ENCODE measurements at regions of chr7 and their contacts with region 1.

Region 1: GRCh38 chr7:157386979-157387800 is 50.4 kb downstream of the DNAJB6 start:
- DNase-seq: peak; percentile 54
- H3K4me3 ChIP-seq: no peak overlapping the region
- H3K27ac ChIP-seq: no peak overlapping the region
- H3K27me3 ChIP-seq: no peaks in the 10 kb centered on the region
- CTCF ChIP-seq: peak; percentile 83

Region 2: DNA sequence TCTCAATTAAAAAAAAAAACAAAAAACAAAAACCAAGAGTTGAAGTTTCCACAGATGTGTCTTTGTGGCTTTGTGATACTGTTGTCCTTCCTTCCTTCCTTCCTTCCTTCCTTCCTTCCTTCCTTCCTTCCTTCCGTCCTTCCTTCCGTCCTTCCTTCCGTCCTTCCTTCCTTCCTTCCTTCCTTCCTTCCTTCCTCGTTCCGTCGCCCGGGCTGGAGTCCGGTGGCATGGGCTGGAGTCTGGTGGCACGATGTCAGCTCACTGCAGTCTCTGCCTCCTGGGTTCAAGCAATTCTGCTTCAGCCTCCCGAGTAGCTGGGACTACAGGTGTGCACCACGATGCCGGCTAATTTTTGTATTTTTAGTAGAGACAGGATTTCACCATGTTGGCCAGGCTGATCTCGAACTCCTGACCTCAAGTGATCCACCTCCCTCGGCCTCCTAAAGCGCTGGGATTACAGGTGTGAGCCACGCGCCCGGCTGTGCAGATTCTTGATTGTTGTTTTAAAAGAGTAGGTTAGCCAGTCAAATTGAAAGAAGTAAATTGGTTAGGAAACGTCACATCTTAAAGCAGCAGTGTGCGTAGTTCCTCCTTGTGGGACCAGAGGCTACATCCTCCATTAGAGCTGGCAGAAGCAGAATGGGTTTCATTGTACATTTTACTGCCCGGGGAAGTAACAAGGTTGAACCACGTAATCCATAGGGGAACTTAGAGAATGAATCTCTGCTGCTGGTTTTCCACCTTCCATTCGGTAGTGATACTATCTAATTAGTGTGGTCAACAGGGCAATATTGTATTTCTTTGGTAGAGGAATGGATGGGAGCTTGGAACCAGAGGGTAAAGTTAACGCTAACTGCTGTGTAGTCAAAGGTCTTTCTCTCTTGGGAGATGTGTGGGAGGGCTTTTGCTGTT is 29.8 kb before region 1 on chr7:
- CTCF ChIA-PET with region 1: interaction called, 11 read pairs
- POLR2A ChIA-PET with region 1: no interaction called
- DNase-seq: no peak
- H3K4me3 ChIP-seq: no peak overlapping the region
- H3K27ac ChIP-seq: no peak overlapping the region
- H3K27me3 ChIP-seq: no peaks in the 10 kb centered on the region
- CTCF ChIP-seq: no peak

Region 3: GRCh38 chr7:157397731-157398691 is 10.8 kb after region 1 on chr7:
- CTCF ChIA-PET with region 1: interaction called, 14 read pairs
- POLR2A ChIA-PET with region 1: no interaction called
- DNase-seq: peak; percentile 53
- H3K4me3 ChIP-seq: peak overlapping the region; percentile 14; the same call in 1 of the 2 replicates
- H3K27ac ChIP-seq: peak overlapping the region; percentile 82
- H3K27me3 ChIP-seq: no peaks in the 10 kb centered on the region
- CTCF ChIP-seq: peak; percentile 68

Measured in AG04450 (cell line).